HEK293 (cell line): ENCODE measurements at regions of chr19 and their contacts with region 1.

Region 1: DNA sequence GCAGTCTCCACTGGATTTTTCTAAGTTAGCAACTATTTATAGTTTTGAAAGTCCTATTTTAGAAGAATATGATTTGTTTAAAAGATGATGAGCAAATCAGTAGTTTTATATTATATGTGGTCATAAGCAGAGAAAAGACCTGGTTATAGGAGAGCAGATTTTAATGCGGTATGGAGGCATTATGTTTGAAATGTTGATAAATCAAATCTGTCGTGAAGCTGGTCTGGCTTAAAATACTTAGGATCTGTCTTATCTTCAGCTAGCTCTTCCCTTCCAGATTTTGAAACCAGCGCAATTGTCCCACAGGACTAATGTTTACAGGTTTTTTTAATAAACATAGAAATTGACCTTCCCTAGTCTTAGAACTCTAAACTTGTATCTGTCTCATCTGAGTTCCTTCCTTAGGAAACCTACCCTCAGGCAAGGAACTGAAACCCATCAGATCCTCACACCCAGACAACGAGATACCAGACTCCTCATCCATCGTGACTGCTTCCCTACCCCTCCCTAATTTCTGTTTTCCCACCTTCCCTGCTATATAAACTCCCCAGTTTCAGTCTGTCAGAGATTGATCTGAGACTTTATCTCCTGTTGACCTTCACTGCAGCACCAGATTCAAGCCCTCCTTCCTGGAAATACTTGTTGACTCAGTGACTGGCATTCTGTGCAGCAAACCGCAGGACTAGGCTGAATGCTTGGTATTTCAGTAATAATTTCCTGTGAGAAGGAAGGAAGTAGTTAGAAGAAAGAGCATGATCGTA is 37.8 kb upstream of the CXCL17 start:
- H3K4me3 ChIP-seq: no peak overlapping the region
- H3K27ac ChIP-seq: no peak overlapping the region
- H3K4me1 ChIP-seq: peaks cover 7% of the 10 kb centered on the region
- CTCF ChIP-seq: no peak

Region 2: GRCh38 chr19:42409477-42409876 is 71.0 kb before region 1 on chr19:
- CTCF ChIA-PET with region 1: no interaction called
- POLR2A ChIA-PET with region 1: no interaction called
- H3K4me3 ChIP-seq: no peak overlapping the region
- H3K27ac ChIP-seq: no peak overlapping the region
- H3K4me1 ChIP-seq: peaks cover 8% of the 10 kb centered on the region
- CTCF ChIP-seq: no peak

Region 3: DNA sequence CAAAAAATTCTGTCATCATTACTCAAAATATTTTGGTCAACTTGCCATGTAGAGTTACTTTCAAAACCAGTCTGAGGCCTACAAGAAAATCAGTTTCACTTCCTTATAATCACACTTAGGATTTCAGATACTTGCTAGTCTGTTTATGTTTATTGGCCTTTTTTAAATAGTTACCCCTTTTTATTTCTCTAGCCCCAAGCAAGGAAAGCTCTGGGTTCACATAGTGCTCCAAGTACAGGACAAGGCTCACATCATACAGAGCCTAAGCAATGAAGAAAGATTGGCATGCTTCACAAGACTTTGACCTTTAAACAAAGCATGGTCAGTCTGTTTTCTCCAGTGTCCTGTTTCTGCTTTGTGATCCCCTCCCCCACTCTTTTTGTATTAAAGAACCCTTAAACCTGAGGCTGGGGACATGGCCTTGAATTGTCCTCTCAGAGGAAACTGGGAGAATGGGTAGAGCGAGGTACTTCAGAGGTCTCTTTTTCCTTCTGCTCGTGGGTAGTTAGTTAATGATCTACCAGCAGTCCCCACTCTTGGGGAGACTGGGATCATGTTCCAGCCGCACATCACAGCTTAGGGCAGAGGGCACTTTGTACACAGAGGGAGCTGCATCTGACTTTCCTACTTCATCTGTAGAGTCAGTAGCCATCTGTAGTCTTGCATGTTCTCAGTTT is 17.1 kb after region 1 on chr19:
- CTCF ChIA-PET with region 1: interaction called, 10 read pairs
- POLR2A ChIA-PET with region 1: no interaction called
- H3K4me3 ChIP-seq: no peak overlapping the region
- H3K27ac ChIP-seq: no peak overlapping the region
- H3K4me1 ChIP-seq: peaks cover 6% of the 10 kb centered on the region; the same call in 1 of the 2 replicates
- CTCF ChIP-seq: no peak